ENCODE measurements at regions of chr14 and their contacts with region 1.

Region 1: GRCh38 chr14:64478634-64479250 is 13.4 kb downstream of the AKAP5 start:
- DNase-seq: no peak
- H3K4me3 ChIP-seq: no peak overlapping the region
- H3K27ac ChIP-seq: no peak overlapping the region
- H3K4me1 ChIP-seq: no peaks in the 10 kb centered on the region
- H3K27me3 ChIP-seq: no peaks in the 10 kb centered on the region
- CTCF ChIP-seq: peak; percentile 43 to 57 (median 51)
- EP300 ChIP-seq: no peak
- POLR2A ChIP-seq: no peak

Region 2: GRCh38 chr14:64438181-64438841 is 40.4 kb before region 1 on chr14:
- intact Hi-C with region 1: loop called (anchors 5 kb)
- DNase-seq: no peak
- H3K4me3 ChIP-seq: no peak overlapping the region
- H3K27ac ChIP-seq: no peak overlapping the region
- H3K4me1 ChIP-seq: peaks cover 0 to 5% (median 0%) of the 10 kb centered on the region in 4 donors
- H3K27me3 ChIP-seq: no peaks in the 10 kb centered on the region
- CTCF ChIP-seq: no peak
- EP300 ChIP-seq: no peak
- POLR2A ChIP-seq: no peak

Region 3: GRCh38 chr14:64510825-64511671 is 32.3 kb after region 1 on chr14:
- intact Hi-C with region 1: loop called (anchors 5 kb)
- DNase-seq: no peak
- H3K4me3 ChIP-seq: no peak overlapping the region
- H3K27ac ChIP-seq: peak overlapping the region in 2 of 4 donors; percentile 18 to 64
- H3K4me1 ChIP-seq: peaks cover 46 to 94% (median 85%) of the 10 kb centered on the region in 4 donors
- H3K27me3 ChIP-seq: no peaks in the 10 kb centered on the region
- CTCF ChIP-seq: peak; percentile 88 to 92 (median 92)
- EP300 ChIP-seq: no peak
- POLR2A ChIP-seq: no peak

Region 4: GRCh38 chr14:64522591-64523355 is 44.0 kb after region 1 on chr14:
- intact Hi-C with region 1: no loop called
- DNase-seq: no peak
- H3K4me3 ChIP-seq: no peak overlapping the region
- H3K27ac ChIP-seq: no peak overlapping the region
- H3K4me1 ChIP-seq: peaks cover 0 to 5% (median 0%) of the 10 kb centered on the region in 4 donors
- H3K27me3 ChIP-seq: no peaks in the 10 kb centered on the region
- CTCF ChIP-seq: no peak
- EP300 ChIP-seq: no peak
- POLR2A ChIP-seq: no peak

Region 5: DNA sequence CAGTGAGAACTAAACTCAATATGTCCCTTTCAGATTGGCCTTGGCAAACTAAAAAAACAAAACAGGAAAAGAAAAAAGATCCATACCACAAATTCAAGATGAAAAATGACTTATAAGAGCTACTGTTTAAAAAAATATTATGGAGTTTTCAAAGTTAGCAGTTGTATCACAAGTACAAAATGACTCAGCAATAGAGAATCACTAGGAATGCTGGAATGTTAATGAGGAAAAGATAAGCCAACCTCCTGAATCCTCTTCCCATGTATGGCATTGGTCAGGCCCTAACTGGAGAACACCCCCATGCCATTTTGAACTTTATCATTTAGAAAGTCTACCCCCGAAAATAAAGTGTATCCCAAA is 133.3 kb after region 1 on chr14:
- intact Hi-C with region 1: no loop called
- DNase-seq: no peak
- H3K4me3 ChIP-seq: no peak overlapping the region
- H3K27ac ChIP-seq: peak overlapping the region; percentile 73 to 83 (median 79)
- H3K4me1 ChIP-seq: peaks cover 18 to 55% (median 53%) of the 10 kb centered on the region in 4 donors
- H3K27me3 ChIP-seq: no peaks in the 10 kb centered on the region
- CTCF ChIP-seq: no peak
- EP300 ChIP-seq: no peak
- POLR2A ChIP-seq: no peak

Measured in esophagus muscularis mucosa (tissue), 4 donors.